ENCODE measurements at regions of chr1 and their contacts with region 1.

Region 1: DNA sequence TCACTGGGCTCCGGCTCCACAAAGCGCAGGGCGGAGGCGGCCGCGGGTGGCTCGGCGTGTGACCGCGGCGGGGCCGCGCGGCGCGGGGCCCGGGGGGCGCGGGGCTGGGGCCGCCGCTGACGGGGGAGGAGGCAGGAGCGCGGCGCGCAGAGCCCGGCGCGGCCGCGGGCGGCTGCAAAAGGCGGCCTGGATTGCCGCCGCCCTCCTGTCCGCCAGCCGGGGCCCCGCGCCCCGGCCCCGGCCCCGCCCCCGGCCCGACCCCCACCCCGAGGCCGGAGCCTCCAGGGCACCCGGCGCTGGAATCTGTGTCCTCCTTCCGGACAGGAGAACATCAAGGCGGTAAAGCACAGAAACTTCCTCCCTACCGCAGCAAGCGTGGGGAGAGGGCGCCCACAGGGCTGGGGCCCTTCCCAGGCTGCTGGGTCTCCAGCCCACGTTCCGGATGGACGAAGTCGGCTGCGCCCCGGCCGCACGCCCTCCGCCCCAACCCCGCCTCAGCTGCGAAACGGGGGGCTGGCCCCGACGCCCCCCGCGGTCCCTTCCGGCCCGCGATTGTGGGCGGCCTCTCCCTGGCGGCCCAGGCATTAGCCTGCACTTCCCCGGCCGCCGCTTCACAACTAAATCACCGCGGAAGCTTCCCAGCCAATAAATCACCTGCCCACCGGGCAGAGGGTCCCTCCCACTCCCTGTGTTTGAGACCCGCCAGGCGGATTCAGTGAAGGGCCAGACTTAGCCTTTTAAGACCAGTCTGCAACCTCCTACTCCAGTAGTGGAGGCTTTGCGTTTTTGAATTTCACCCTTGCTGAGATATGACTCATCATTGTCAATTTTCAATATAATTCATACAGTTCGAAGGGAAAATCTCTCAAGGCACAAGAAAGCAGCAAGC is 106.0 kb downstream of the SLC45A1 start:
- DNase-seq: peak; percentile 36
- ATAC-seq: peak; percentile 80
- H3K4me3 ChIP-seq: peak overlapping the region; percentile 66 to 76
- H3K27ac ChIP-seq: peak overlapping the region; percentile 78
- H3K4me1 ChIP-seq: peaks cover 17 to 25% of the 10 kb centered on the region in 2 experiments
- H3K27me3 ChIP-seq: no peaks in the 10 kb centered on the region
- CTCF ChIP-seq: no peak
- POLR2A ChIP-seq: peak; percentile 13
- RAD21 ChIP-seq: no peak

Region 2: GRCh38 chr1:8283058-8283884 is 140.6 kb before region 1 on chr1:
- CTCF ChIA-PET with region 1: no interaction called
- POLR2A ChIA-PET with region 1: no interaction called
- RAD21 ChIA-PET with region 1: no interaction called
- intact Hi-C with region 1: no loop called
- DNase-seq: no peak
- ATAC-seq: no peak
- H3K4me3 ChIP-seq: no peak overlapping the region
- H3K27ac ChIP-seq: no peak overlapping the region
- H3K4me1 ChIP-seq: peaks cover 8 to 43% of the 10 kb centered on the region in 2 experiments; a peak in 3 of 4 replicates
- H3K27me3 ChIP-seq: no peaks in the 10 kb centered on the region
- CTCF ChIP-seq: no peak
- POLR2A ChIP-seq: no peak
- RAD21 ChIP-seq: no peak

Region 3: GRCh38 chr1:8364528-8365442 is 59.1 kb before region 1 on chr1:
- CTCF ChIA-PET with region 1: no interaction called
- POLR2A ChIA-PET with region 1: no interaction called
- RAD21 ChIA-PET with region 1: no interaction called
- intact Hi-C with region 1: no loop called
- DNase-seq: no peak
- ATAC-seq: no peak
- H3K4me3 ChIP-seq: no peak overlapping the region
- H3K27ac ChIP-seq: no peak overlapping the region
- H3K4me1 ChIP-seq: no peaks in the 10 kb centered on the region
- H3K27me3 ChIP-seq: no peaks in the 10 kb centered on the region
- CTCF ChIP-seq: no peak
- POLR2A ChIP-seq: no peak
- RAD21 ChIP-seq: no peak

Region 4: GRCh38 chr1:8702850-8703810 is 279.2 kb after region 1 on chr1:
- CTCF ChIA-PET with region 1: no interaction called
- POLR2A ChIA-PET with region 1: no interaction called
- RAD21 ChIA-PET with region 1: no interaction called
- intact Hi-C with region 1: loop called (anchors 5 kb)
- DNase-seq: peak; percentile 82
- ATAC-seq: peak; percentile 92
- H3K4me3 ChIP-seq: peak overlapping the region; percentile 51 to 64
- H3K27ac ChIP-seq: peak overlapping the region; percentile 63
- H3K4me1 ChIP-seq: peaks cover 31 to 34% of the 10 kb centered on the region in 2 experiments
- H3K27me3 ChIP-seq: no peaks in the 10 kb centered on the region
- CTCF ChIP-seq: no peak
- POLR2A ChIP-seq: peak; percentile 48
- RAD21 ChIP-seq: peak; percentile 39; the same call in 1 of the 2 replicates